Common myeloid progenitor, CD34-positive (primary cell): ENCODE measurements at regions of chr11 and their contacts with region 1.

Region 1: GRCh38 chr11:78564490-78565467 is 9.9 kb downstream of the NARS2 start:
- DNase-seq: peak; percentile 81 to 90 (median 86)
- H3K4me3 ChIP-seq: peak overlapping the region in 3 of 7 experiments; percentile 22 to 40 (median 37)
- H3K27ac ChIP-seq: peak overlapping the region in 1 of 2 experiments; percentile 28
- H3K4me1 ChIP-seq: peaks cover 28 to 54% (median 45%) of the 10 kb centered on the region in 4 experiments
- H3K27me3 ChIP-seq: no peaks in the 10 kb centered on the region

Region 2: DNA sequence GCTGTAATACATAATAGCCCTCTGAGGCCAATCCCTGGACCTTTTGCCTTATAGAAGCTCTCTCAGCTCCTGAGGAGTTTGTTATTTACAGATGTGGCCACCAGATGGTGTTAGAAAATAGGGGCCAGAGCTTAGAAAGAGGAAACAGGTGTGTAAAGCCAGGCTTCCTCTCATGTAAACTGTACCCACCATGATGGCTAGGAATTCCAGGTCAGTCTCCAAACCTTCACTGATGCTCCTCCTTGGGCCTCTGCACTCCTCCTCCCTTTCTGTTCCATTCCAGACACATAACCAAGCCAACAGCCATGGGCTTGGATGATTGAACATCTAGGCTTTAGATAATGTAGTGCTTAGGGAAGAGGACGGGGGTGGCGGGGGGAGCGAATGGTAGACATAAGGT is 336.3 kb before region 1 on chr11:
- CTCF ChIA-PET with region 1: interaction called, 67 read pairs
- POLR2A ChIA-PET with region 1: no interaction called
- DNase-seq: peak; percentile 77 to 88 (median 87)
- H3K4me3 ChIP-seq: no peak overlapping the region
- H3K27ac ChIP-seq: no peak overlapping the region
- H3K4me1 ChIP-seq: peaks cover 2 to 22% (median 11%) of the 10 kb centered on the region in 4 experiments
- H3K27me3 ChIP-seq: no peaks in the 10 kb centered on the region

Region 3: DNA sequence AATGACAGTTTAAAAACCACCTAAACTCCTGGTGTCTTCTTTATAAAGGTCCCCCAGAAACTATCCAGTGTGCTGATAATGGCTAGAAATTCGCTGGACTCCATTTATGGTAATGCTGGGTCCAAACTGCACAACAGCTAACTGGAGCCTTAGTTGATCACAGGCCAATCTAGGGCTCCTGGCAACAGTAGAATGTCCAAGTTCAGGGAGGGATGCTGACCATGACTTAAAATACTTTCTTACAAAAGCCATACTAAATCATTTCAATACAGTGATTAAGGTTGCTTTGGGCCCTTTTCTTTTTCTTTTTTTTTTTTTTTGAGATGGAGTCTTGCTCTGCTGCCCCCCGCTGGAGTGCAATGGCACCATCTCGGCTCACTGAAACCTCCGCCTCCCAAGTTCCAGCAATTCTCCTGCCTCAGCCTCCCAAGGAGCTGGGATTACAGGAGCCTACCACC is 132.7 kb before region 1 on chr11:
- CTCF ChIA-PET with region 1: interaction called, 38 read pairs
- POLR2A ChIA-PET with region 1: no interaction called
- DNase-seq: peak in 1 of 3 donors; percentile 40
- H3K4me3 ChIP-seq: no peak overlapping the region
- H3K27ac ChIP-seq: no peak overlapping the region
- H3K4me1 ChIP-seq: peaks cover 28 to 36% (median 33%) of the 10 kb centered on the region in 4 experiments
- H3K27me3 ChIP-seq: no peaks in the 10 kb centered on the region

Region 4: GRCh38 chr11:78552881-78553280 is 11.9 kb before region 1 on chr11:
- CTCF ChIA-PET with region 1: interaction called, 12 read pairs
- POLR2A ChIA-PET with region 1: no interaction called
- DNase-seq: peak in 2 of 3 donors; percentile 28 to 56
- H3K4me3 ChIP-seq: no peak overlapping the region
- H3K27ac ChIP-seq: no peak overlapping the region
- H3K4me1 ChIP-seq: peaks cover 0 to 4% (median 0%) of the 10 kb centered on the region in 4 experiments
- H3K27me3 ChIP-seq: no peaks in the 10 kb centered on the region